ENCODE measurements at regions of chr1 and their contacts with region 1.

Region 1: DNA sequence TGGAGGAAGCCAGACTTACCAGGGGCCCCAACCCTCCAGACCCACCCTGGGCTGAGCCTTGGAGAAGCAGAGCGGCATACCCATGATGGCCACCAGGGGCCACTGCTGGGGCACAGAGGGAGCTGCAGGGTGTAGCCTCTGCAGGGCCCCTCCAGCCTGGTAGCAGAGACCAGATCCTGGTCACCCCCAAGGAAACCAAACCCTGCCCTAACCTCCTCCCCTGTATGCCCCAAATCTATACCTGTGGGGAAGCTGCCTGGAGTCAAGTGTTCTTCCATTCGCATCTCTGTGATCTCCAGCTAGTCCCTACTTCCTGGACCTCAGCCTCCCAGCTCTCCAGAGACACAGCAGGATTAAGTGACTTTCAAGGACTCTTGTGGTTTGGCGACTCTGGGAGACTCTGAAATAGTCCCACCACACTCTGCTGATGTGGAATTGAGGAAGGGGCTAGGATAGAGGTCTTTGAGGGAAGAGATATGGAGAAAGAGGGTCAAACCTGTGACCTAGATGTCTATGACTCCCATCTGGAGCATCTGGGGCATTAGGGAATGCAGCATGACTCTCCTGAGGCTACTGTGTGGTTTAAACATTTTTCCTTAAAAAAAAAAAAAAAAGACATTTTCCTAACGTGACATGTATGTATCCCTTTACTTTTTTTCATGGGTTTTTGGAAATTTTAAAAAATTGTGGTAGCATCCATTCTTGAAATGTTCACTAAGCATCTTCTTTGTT is 119.2 kb upstream of the IPO9 start:
- DNase-seq: peak in 1 of 2 experiments; percentile 71
- H3K4me3 ChIP-seq: no peak overlapping the region
- H3K27ac ChIP-seq: no peak overlapping the region
- H3K4me1 ChIP-seq: peaks cover 27% of the 10 kb centered on the region
- H3K27me3 ChIP-seq: no peaks in the 10 kb centered on the region
- CTCF ChIP-seq: peak; percentile 85

Region 2: GRCh38 chr1:201551877-201552731 is 157.6 kb before region 1 on chr1:
- CTCF ChIA-PET with region 1: interaction called, 3 read pairs
- POLR2A ChIA-PET with region 1: interaction called, 12 read pairs
- intact Hi-C with region 1: no loop called
- DNase-seq: peak; percentile 55 to 76
- H3K4me3 ChIP-seq: no peak overlapping the region
- H3K27ac ChIP-seq: peak overlapping the region; percentile 66
- H3K4me1 ChIP-seq: peaks cover 18% of the 10 kb centered on the region
- H3K27me3 ChIP-seq: no peaks in the 10 kb centered on the region
- CTCF ChIP-seq: no peak

Region 3: DNA sequence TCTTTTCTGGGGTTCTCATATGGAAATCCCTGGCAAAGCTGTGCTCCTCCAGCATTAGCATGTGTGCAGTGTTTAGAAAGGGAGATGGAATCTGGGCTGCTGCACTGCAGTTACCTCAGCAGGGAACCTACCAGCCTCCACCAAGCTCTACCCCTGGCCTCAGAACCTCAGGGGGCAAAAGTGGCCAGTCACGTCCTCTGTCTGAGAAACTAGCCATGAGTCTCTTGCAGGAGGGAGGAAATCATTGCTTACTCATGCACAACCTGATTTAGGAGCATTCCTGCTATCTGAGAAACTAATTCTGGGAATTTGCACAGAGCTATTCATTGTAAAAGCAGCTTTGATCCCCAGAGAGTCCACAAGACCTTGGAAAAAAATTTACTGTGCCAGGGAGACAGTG is 38.6 kb after region 1 on chr1:
- CTCF ChIA-PET with region 1: interaction called, 3 read pairs
- POLR2A ChIA-PET with region 1: interaction called, 7 read pairs
- intact Hi-C with region 1: loop called (anchors 2 kb)
- DNase-seq: peak; percentile 54 to 77
- H3K4me3 ChIP-seq: no peak overlapping the region
- H3K27ac ChIP-seq: peak overlapping the region; percentile 63
- H3K4me1 ChIP-seq: peaks cover 56% of the 10 kb centered on the region
- H3K27me3 ChIP-seq: no peaks in the 10 kb centered on the region
- CTCF ChIP-seq: no peak

Region 4: DNA sequence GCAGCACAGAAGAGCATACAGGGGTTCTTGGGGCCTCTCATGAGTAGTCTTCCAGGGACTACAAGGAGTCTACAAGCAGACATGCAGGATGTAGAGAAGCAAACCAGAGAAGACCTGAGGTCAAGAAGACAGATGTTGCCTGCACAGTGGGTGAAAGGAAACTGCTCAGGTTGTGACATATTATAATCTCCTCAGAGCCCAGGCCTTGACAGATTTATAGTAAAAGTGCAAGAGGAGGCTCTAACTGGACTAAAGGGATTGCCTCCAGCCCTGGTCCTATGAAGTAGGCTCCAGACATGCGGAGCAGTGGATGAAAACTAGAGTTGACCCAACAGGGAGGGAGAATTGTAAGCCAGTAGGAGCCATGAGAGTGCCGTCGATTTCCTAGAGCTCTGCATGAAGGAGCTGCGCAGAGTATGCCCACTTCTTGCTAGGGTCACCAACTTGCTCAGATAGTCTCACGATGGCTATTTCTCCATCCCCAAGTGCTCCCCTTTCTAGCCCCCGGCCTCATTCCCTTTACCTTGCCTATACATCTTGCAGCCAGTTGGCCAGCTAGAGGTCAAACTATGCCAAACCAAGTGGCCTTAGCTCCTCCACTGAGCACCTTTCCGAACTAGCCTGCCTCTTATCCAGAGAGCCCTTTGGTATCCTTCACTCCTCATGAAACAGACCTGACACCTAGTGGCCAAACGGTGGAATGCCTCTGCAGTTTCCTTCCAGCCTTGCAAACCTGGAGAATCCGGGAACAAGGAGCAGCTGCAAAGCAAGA is 83.0 kb after region 1 on chr1:
- CTCF ChIA-PET with region 1: interaction called, 29 read pairs
- POLR2A ChIA-PET with region 1: interaction called, 4 read pairs
- intact Hi-C with region 1: loop called (anchors 1 kb)
- DNase-seq: peak; percentile 65 to 73
- H3K4me3 ChIP-seq: no peak overlapping the region
- H3K27ac ChIP-seq: no peak overlapping the region
- H3K4me1 ChIP-seq: no peaks in the 10 kb centered on the region
- H3K27me3 ChIP-seq: no peaks in the 10 kb centered on the region
- CTCF ChIP-seq: peak; percentile 98

Region 5: GRCh38 chr1:202085682-202086404 is 376.1 kb after region 1 on chr1:
- CTCF ChIA-PET with region 1: interaction called, 16 read pairs
- POLR2A ChIA-PET with region 1: no interaction called
- intact Hi-C with region 1: no loop called
- DNase-seq: peak; percentile 41 to 53
- H3K4me3 ChIP-seq: no peak overlapping the region
- H3K27ac ChIP-seq: peak overlapping the region; percentile 44
- H3K4me1 ChIP-seq: peaks cover 47% of the 10 kb centered on the region
- H3K27me3 ChIP-seq: no peaks in the 10 kb centered on the region
- CTCF ChIP-seq: no peak

Measured in PC-9 (cell line).